ENCODE measurements at regions of chr13 and their contacts with region 1.

Region 1: GRCh38 chr13:41193919-41194824 is at the start of gene KBTBD7:
- DNase-seq: peak; percentile 94 to 97 (median 96)
- ATAC-seq: peak; percentile 95 to 100 (median 100)
- H3K4me3 ChIP-seq: peak within 1 kb of the TSS; percentile 56 to 92 (median 78)
- H3K27ac ChIP-seq: peak within 1 kb of the TSS; percentile 75 to 97 (median 92)
- H3K4me1 ChIP-seq: peaks cover 0 to 37% (median 17%) of the 10 kb centered on the region in 12 donors
- H3K27me3 ChIP-seq: no peaks in the 10 kb centered on the region
- CTCF ChIP-seq: peak in 3 of 12 donors; percentile 11 to 31 (median 18)
- POLR2A ChIP-seq: peak in 1 of 2 donors; percentile 82
- total RNA-seq, gene KBTBD7: 4.2 to 9.1 (median 6.0) TPM

Region 2: GRCh38 chr13:41132512-41133152 is 61.5 kb before region 1 on chr13 and contains the start of gene KBTBD6:
- intact Hi-C with region 1: loop called (anchors 1 to 5 kb)
- DNase-seq: peak; percentile 96 to 98 (median 97)
- ATAC-seq: peak; percentile 96 to 100 (median 99)
- H3K4me3 ChIP-seq: peak within 1 kb of the TSS; percentile 64 to 88 (median 76)
- H3K27ac ChIP-seq: peak within 1 kb of the TSS; percentile 77 to 91 (median 86)
- H3K4me1 ChIP-seq: peaks cover 0 to 48% (median 34%) of the 10 kb centered on the region in 12 donors
- H3K27me3 ChIP-seq: no peaks in the 10 kb centered on the region
- CTCF ChIP-seq: no peak
- POLR2A ChIP-seq: peak in 1 of 2 donors; percentile 72
- total RNA-seq, gene KBTBD6: 6.1 to 11.9 (median 6.7) TPM

Region 3: DNA sequence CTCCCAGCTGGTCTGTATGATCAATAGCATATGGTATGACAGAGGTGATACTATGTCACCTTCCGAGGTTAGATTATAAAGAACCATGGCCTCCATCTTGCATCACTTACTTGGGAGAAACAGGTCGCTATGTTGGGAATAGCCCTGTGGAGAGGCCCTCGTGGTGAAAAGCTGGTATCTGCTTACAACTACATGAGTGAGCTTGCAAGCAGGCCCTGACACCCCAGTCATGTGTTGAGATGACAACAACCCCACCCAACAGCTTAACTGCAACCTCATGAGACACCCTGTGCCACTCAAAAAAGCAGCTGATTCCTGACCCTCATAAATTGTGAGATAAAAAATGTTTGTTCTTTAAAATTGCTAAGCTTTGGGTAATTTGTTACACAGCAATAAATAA is 50.4 kb after region 1 on chr13:
- intact Hi-C with region 1: no loop called
- DNase-seq: no peak
- ATAC-seq: no peak
- H3K4me3 ChIP-seq: no peak overlapping the region
- H3K27ac ChIP-seq: no peak overlapping the region
- H3K4me1 ChIP-seq: peaks cover 0 to 9% (median 0%) of the 10 kb centered on the region in 12 donors
- H3K27me3 ChIP-seq: no peaks in the 10 kb centered on the region
- CTCF ChIP-seq: no peak
- POLR2A ChIP-seq: no peak

Measured in heart left ventricle (tissue), 16 donors.